ENCODE measurements at regions of chr6 and their contacts with region 1.

Region 1: DNA sequence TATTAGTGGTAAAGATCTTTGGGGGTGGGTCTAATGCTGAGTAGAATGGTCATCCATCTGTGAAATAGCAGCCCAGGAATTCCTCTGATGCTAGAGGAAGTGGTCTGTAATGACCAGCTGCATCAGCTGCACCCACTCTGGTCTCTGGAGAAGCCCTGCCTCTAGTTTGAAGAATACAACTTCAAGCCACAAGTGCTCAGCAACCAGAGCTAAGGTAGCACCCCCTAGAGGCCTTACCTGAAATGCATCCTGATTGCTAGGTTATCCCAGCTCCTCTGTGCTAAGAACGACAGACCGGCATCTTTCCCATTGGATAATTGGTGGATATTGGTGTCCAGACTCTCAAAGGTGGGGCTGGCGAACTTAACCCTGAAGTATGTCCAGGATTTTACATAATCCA is 58.2 kb downstream of the DNAH8 start:
- DNase-seq: peak; percentile 25
- CTCF ChIP-seq: peak; percentile 52

Region 2: GRCh38 chr6:38753707-38754106 is 19.6 kb before region 1 on chr6:
- CTCF ChIA-PET with region 1: interaction called, 16 read pairs
- POLR2A ChIA-PET with region 1: no interaction called
- DNase-seq: no peak
- CTCF ChIP-seq: no peak

Region 3: GRCh38 chr6:38784506-38785235 is 11.3 kb after region 1 on chr6:
- CTCF ChIA-PET with region 1: interaction called, 21 read pairs
- POLR2A ChIA-PET with region 1: no interaction called
- DNase-seq: no peak
- CTCF ChIP-seq: no peak

Region 4: GRCh38 chr6:38813041-38813823 is 39.9 kb after region 1 on chr6:
- CTCF ChIA-PET with region 1: no interaction called
- POLR2A ChIA-PET with region 1: no interaction called
- DNase-seq: no peak
- CTCF ChIP-seq: no peak

Measured in GM10248 (cell line).